IMR-90 (cell line): ENCODE measurements at regions of chr9 and their contacts with region 1.

Region 1: DNA sequence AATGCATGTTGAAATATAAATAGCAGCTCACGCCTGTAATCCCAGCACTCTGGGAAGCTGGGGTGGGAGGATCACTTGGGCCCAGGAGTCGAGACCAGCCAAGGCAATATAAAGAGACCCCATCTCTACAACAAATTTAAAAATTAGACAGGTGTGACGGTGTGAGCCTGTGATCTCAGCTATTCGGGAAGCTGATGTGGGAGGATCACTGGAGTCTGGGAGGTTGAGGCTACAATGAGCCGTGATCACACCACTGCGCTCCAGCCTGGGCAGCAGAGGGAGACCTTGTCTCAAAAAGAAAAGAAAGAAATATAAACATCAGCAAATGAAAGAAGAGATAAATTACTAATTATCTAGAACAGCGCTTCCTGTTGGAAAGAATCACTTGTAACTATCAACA is 105.0 kb downstream of the MAPKAP1 start:
- DNase-seq: no peak
- ATAC-seq: no peak
- H3K4me3 ChIP-seq: no peak overlapping the region
- H3K27ac ChIP-seq: no peak overlapping the region
- H3K4me1 ChIP-seq: no peaks in the 10 kb centered on the region; the same call in 1 of the 2 replicates
- H3K27me3 ChIP-seq: no peaks in the 10 kb centered on the region
- CTCF ChIP-seq: 0 out of 2 replicates have a peak, but pooled peaks have one; percentile 20
- POLR2A ChIP-seq: no peak
- RAD21 ChIP-seq: no peak

Region 2: GRCh38 chr9:124522121-124523098 is 1079.6 kb before region 1 on chr9:
- CTCF ChIA-PET with region 1: no interaction called
- POLR2A ChIA-PET with region 1: interaction called, 10 read pairs
- dilution Hi-C with region 1: no loop called
- in situ Hi-C with region 1: no loop called
- intact Hi-C with region 1: no loop called
- DNase-seq: peak; percentile 31
- ATAC-seq: peak; percentile 62
- H3K4me3 ChIP-seq: no peak overlapping the region
- H3K27ac ChIP-seq: no peak overlapping the region
- H3K4me1 ChIP-seq: peaks cover 4% of the 10 kb centered on the region
- H3K27me3 ChIP-seq: peaks cover 11% of the 10 kb centered on the region
- CTCF ChIP-seq: no peak
- POLR2A ChIP-seq: no peak
- RAD21 ChIP-seq: no peak

Region 3: GRCh38 chr9:125568621-125569020 is 33.3 kb before region 1 on chr9:
- CTCF ChIA-PET with region 1: no interaction called
- POLR2A ChIA-PET with region 1: no interaction called
- dilution Hi-C with region 1: no loop called
- in situ Hi-C with region 1: no loop called
- intact Hi-C with region 1: loop called (anchors 1 kb)
- DNase-seq: peak; percentile 39
- ATAC-seq: no peak
- H3K4me3 ChIP-seq: no peak overlapping the region
- H3K27ac ChIP-seq: no peak overlapping the region
- H3K4me1 ChIP-seq: peaks cover 3% of the 10 kb centered on the region; the same call in 1 of the 2 replicates
- H3K27me3 ChIP-seq: no peaks in the 10 kb centered on the region
- CTCF ChIP-seq: no peak
- POLR2A ChIP-seq: no peak
- RAD21 ChIP-seq: no peak